GM12878 (cell line): ENCODE measurements at regions of chr21 and their contacts with region 1.

Region 1: DNA sequence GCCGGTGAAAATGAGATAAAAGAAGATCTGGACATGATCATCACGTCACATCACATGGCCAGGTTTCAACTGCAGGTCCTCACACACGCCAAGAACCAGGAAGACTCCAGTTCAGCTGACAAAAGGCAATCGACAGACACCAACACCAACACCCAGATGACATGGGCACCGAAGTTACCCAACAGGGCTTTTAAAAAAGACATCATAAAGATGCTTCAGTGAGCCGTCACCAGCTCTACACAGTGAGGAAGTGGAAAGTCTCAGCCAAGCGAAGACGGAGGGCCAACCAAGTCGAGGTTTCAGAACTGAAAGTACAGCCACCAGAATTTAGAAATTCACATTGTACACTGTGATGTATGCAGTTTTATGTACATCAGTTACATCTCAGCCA is 154.3 kb upstream of the COL6A1 start:
- DNase-seq: no peak
- ATAC-seq: peak; percentile 75
- H3K4me3 ChIP-seq: no peak overlapping the region
- H3K27ac ChIP-seq: no peak overlapping the region
- H3K4me1 ChIP-seq: peaks cover 5% of the 10 kb centered on the region; the same call in 1 of the 2 replicates
- H3K27me3 ChIP-seq: no peaks in the 10 kb centered on the region
- CTCF ChIP-seq: no peak
- EP300 ChIP-seq: no peak
- POLR2A ChIP-seq: no peak
- RAD21 ChIP-seq: no peak

Region 2: GRCh38 chr21:44949779-44950198 is 877.5 kb before region 1 on chr21:
- CTCF ChIA-PET with region 1: no interaction called
- POLR2A ChIA-PET with region 1: no interaction called
- RAD21 ChIA-PET with region 1: no interaction called
- SMC1A ChIA-PET with region 1: no interaction called
- in situ Hi-C with region 1: loop called (anchors 5 kb)
- intact Hi-C with region 1: no loop called
- DNase-seq: no peak
- ATAC-seq: peak; percentile 96
- H3K4me3 ChIP-seq: no peak overlapping the region
- H3K27ac ChIP-seq: no peak overlapping the region
- H3K4me1 ChIP-seq: no peaks in the 10 kb centered on the region
- H3K27me3 ChIP-seq: no peaks in the 10 kb centered on the region
- CTCF ChIP-seq: peak; percentile 90 to 96 (median 95); a peak in 5 of 6 replicates
- EP300 ChIP-seq: no peak
- POLR2A ChIP-seq: no peak
- RAD21 ChIP-seq: peak; percentile 91

Region 3: GRCh38 chr21:45809421-45809820 is 17.9 kb before region 1 on chr21:
- CTCF ChIA-PET with region 1: no interaction called
- POLR2A ChIA-PET with region 1: no interaction called
- RAD21 ChIA-PET with region 1: no interaction called
- SMC1A ChIA-PET with region 1: no interaction called
- in situ Hi-C with region 1: no loop called
- intact Hi-C with region 1: no loop called
- DNase-seq: no peak
- ATAC-seq: no peak
- H3K4me3 ChIP-seq: no peak overlapping the region
- H3K27ac ChIP-seq: no peak overlapping the region
- H3K4me1 ChIP-seq: no peaks in the 10 kb centered on the region
- H3K27me3 ChIP-seq: no peaks in the 10 kb centered on the region
- CTCF ChIP-seq: no peak
- EP300 ChIP-seq: no peak
- POLR2A ChIP-seq: no peak
- RAD21 ChIP-seq: no peak